Activated CD4-positive, alpha-beta memory T cell treated with anti-CD3 and anti-CD28 coated beads for 36 hours (primary cell): ENCODE measurements at regions of chr12 and their contacts with region 1.

Region 1: GRCh38 chr12:42023733-42024494 is 120.8 kb downstream of the GXYLT1 start:
- DNase-seq: peak; percentile 80
- H3K4me3 Mint-ChIP-seq: peak overlapping the region; percentile 54
- H3K27ac Mint-ChIP-seq: no peak overlapping the region
- H3K4me1 Mint-ChIP-seq: peaks cover 8% of the 10 kb centered on the region
- H3K27me3 Mint-ChIP-seq: peaks cover 10% of the 10 kb centered on the region

Region 2: DNA sequence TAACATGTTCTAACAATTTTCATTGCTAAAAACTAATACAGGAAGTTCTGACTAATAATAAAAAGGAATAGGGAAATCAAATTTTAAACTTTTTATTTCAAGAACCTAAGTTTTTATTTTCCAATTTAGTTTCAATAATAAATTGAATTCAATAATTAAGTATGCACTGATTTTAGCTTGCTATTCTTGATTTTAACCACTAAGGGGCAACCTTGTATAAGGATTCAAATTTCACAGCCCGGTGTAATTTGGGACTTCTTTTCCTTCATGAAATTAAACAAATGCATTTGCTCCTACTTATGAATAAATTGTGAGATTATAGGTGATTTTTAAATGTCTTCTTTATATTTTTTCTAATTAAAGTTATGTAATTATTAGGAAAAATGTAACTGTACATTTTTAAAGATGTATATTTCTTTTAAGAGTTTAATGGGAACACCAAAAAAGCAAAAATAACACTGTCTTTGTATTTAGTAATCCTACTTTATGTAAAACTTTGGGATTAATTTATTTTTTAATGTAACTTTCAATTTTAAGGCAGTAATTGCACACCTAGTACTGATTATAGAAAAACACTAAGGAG is 1077.2 kb before region 1 on chr12:
- CTCF ChIA-PET with region 1: interaction called, 33 read pairs
- POLR2A ChIA-PET with region 1: no interaction called
- intact Hi-C with region 1: loop called (anchors 1 kb)
- DNase-seq: no peak
- H3K4me3 Mint-ChIP-seq: no peak overlapping the region
- H3K27ac Mint-ChIP-seq: no peak overlapping the region
- H3K4me1 Mint-ChIP-seq: no peaks in the 10 kb centered on the region
- H3K27me3 Mint-ChIP-seq: peaks cover 4% of the 10 kb centered on the region

Region 3: GRCh38 chr12:41277116-41277945 is 746.6 kb before region 1 on chr12:
- CTCF ChIA-PET with region 1: interaction called, 28 read pairs
- POLR2A ChIA-PET with region 1: no interaction called
- intact Hi-C with region 1: loop called (anchors 1 kb)
- DNase-seq: peak; percentile 9
- H3K4me3 Mint-ChIP-seq: no peak overlapping the region
- H3K27ac Mint-ChIP-seq: no peak overlapping the region
- H3K4me1 Mint-ChIP-seq: no peaks in the 10 kb centered on the region
- H3K27me3 Mint-ChIP-seq: no peaks in the 10 kb centered on the region

Region 4: GRCh38 chr12:41684997-41685396 is 338.9 kb before region 1 on chr12:
- CTCF ChIA-PET with region 1: interaction called, 5 read pairs
- POLR2A ChIA-PET with region 1: no interaction called
- intact Hi-C with region 1: loop called (anchors 5 kb)
- DNase-seq: no peak
- H3K4me3 Mint-ChIP-seq: no peak overlapping the region
- H3K27ac Mint-ChIP-seq: no peak overlapping the region
- H3K4me1 Mint-ChIP-seq: no peaks in the 10 kb centered on the region
- H3K27me3 Mint-ChIP-seq: no peaks in the 10 kb centered on the region

Region 5: DNA sequence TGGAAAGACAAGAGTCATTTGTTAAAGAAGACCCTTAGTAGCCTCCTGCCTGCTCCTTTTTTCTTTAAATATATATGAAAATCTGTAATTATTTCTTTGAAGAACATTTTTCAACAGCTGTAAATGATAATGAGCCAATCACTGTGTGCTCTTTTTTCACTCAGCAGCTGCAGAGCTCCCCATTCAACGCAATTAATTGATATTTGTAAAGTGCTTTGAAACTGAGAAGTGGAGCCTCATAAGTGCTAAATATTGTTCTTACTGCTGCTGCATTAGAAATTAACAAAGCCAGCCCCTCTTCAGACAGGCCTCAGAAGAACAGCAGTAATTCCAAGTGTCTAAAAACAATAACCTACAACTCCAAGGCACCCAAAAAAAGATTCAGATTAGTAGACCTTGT is 103.6 kb before region 1 on chr12:
- CTCF ChIA-PET with region 1: no interaction called
- POLR2A ChIA-PET with region 1: no interaction called
- intact Hi-C with region 1: no loop called
- DNase-seq: no peak
- H3K4me3 Mint-ChIP-seq: no peak overlapping the region
- H3K27ac Mint-ChIP-seq: no peak overlapping the region
- H3K4me1 Mint-ChIP-seq: no peaks in the 10 kb centered on the region
- H3K27me3 Mint-ChIP-seq: peaks cover 7% of the 10 kb centered on the region

Region 6: DNA sequence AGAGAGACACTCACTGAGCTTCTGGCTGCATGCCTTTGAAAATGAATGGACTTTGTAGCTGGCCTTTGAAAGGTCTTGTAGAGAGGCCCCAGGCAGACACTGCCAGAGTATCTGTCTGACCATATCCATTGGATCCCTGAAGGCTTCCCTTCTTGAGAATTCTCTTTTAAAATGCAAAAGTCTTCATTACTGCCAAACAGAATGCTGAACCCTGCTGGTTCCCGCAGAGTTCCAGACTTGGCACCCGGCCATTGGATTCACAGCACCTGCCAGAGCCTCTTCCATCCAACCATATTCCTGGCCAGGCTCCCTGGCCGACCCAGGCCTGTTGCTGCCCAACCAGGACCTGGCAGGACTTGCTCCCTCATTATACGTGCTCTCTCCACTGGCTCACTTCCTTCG is 61.7 kb before region 1 on chr12:
- CTCF ChIA-PET with region 1: no interaction called
- POLR2A ChIA-PET with region 1: no interaction called
- intact Hi-C with region 1: no loop called
- DNase-seq: no peak
- H3K4me3 Mint-ChIP-seq: no peak overlapping the region
- H3K27ac Mint-ChIP-seq: no peak overlapping the region
- H3K4me1 Mint-ChIP-seq: no peaks in the 10 kb centered on the region
- H3K27me3 Mint-ChIP-seq: peaks cover 1% of the 10 kb centered on the region

Region 7: GRCh38 chr12:42332301-42333285 is 308.7 kb after region 1 on chr12:
- CTCF ChIA-PET with region 1: interaction called, 8 read pairs
- POLR2A ChIA-PET with region 1: no interaction called
- intact Hi-C with region 1: loop called (anchors 5 kb)
- DNase-seq: no peak
- H3K4me3 Mint-ChIP-seq: no peak overlapping the region
- H3K27ac Mint-ChIP-seq: no peak overlapping the region
- H3K4me1 Mint-ChIP-seq: peaks cover 51% of the 10 kb centered on the region
- H3K27me3 Mint-ChIP-seq: no peaks in the 10 kb centered on the region

Region 8: DNA sequence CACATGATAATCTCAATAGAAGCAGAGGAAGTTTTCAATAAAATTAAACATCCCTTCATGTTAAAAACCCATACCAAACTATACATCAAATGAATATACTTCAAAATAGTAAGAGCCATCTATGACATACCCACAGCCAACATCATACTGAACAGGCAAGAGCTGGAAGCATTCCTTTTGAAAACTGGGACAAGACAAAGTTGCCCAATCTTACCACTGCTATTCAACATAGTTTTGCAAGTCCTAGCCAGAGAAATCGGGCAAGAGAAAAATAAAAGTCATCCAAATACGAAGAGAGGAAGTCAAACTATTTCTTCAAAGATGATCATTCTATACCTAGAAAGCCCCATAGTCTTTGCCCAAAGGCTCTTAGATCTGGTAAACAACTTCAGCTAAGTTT is 1020.3 kb after region 1 on chr12:
- CTCF ChIA-PET with region 1: no interaction called
- POLR2A ChIA-PET with region 1: no interaction called
- intact Hi-C with region 1: no loop called
- DNase-seq: no peak
- H3K4me3 Mint-ChIP-seq: no peak overlapping the region
- H3K27ac Mint-ChIP-seq: no peak overlapping the region
- H3K4me1 Mint-ChIP-seq: no peaks in the 10 kb centered on the region
- H3K27me3 Mint-ChIP-seq: no peaks in the 10 kb centered on the region